ENCODE measurements at regions of chr11 and their contacts with region 1.

Region 1: GRCh38 chr11:93741094-93741881 is at the starts of genes C11orf54 and TAF1D:
- DNase-seq: peak; percentile 92 to 99 (median 94)
- ATAC-seq: peak; percentile 87
- H3K4me3 ChIP-seq: peak within 1 kb of the TSS; percentile 79
- H3K27ac ChIP-seq: peak within 1 kb of the TSS; percentile 98
- H3K4me1 ChIP-seq: peaks cover 4 to 10% of the 10 kb centered on the region in 2 experiments; a peak in 4 of 5 replicates
- H3K27me3 ChIP-seq: no peaks in the 10 kb centered on the region
- CTCF ChIP-seq: 0 out of 6 replicates have a peak, but pooled peaks of 1 of the 3 experiments have one; percentile 1
- EP300 ChIP-seq: peak; percentile 35; the same call in 1 of the 2 replicates
- POLR2A ChIP-seq: peak; percentile 99
- RAD21 ChIP-seq: no peak
- polyA plus RNA-seq, gene C11orf54: 31.5 to 31.7 TPM
- polyA plus RNA-seq, gene TAF1D: 122 to 123 TPM

Region 2: GRCh38 chr11:93498641-93499040 is 242.6 kb before region 1 on chr11:
- CTCF ChIA-PET with region 1: no interaction called
- POLR2A ChIA-PET with region 1: no interaction called
- in situ Hi-C with region 1: no loop called
- intact Hi-C with region 1: no loop called
- DNase-seq: no peak
- ATAC-seq: no peak
- H3K4me3 ChIP-seq: no peak overlapping the region
- H3K27ac ChIP-seq: no peak overlapping the region
- H3K4me1 ChIP-seq: no peaks in the 10 kb centered on the region
- H3K27me3 ChIP-seq: no peaks in the 10 kb centered on the region
- CTCF ChIP-seq: no peak
- EP300 ChIP-seq: no peak
- POLR2A ChIP-seq: no peak
- RAD21 ChIP-seq: no peak

Region 3: DNA sequence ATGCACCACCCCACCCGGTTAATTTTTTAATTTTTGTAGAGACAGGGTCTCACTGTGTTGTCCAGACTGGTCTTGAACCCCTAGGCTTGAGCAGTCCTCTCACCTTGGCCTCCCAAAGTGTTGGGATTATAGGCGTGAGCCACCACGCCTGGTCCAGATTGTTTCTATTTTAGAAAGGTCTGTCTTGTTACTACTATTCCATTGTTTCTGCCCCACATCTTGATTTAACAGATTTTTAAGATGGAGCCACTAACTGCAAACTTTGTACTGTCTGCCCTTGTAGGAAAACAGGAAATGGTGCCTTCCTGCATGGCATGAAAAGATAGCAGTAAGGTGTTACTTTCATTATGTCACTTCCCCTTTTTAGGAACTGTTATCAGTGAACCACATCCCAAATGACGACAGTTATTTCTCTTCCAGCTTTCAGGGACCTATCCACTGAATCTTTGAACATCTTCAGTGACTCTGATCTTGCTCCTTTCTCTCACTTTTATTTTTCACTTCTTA is 23.2 kb before region 1 on chr11:
- CTCF ChIA-PET with region 1: no interaction called
- POLR2A ChIA-PET with region 1: interaction called, 41 read pairs
- in situ Hi-C with region 1: no loop called
- intact Hi-C with region 1: loop called (anchors 1 kb)
- DNase-seq: peak in 3 of 4 experiments; percentile 17 to 84 (median 80)
- ATAC-seq: peak; percentile 79
- H3K4me3 ChIP-seq: no peak overlapping the region
- H3K27ac ChIP-seq: peak overlapping the region; percentile 89
- H3K4me1 ChIP-seq: peaks cover 8 to 35% of the 10 kb centered on the region in 2 experiments
- H3K27me3 ChIP-seq: no peaks in the 10 kb centered on the region
- CTCF ChIP-seq: no peak
- EP300 ChIP-seq: peak; percentile 99
- POLR2A ChIP-seq: no peak
- RAD21 ChIP-seq: no peak; a peak in 1 of 4 replicates

Region 4: GRCh38 chr11:93727985-93728791 is 13.1 kb before region 1 on chr11:
- CTCF ChIA-PET with region 1: interaction called, 4 read pairs
- POLR2A ChIA-PET with region 1: interaction called, 98 read pairs
- in situ Hi-C with region 1: no loop called
- intact Hi-C with region 1: no loop called
- DNase-seq: no peak
- ATAC-seq: peak; percentile 18
- H3K4me3 ChIP-seq: no peak overlapping the region
- H3K27ac ChIP-seq: peak overlapping the region; percentile 21; the same call in 1 of the 3 replicates
- H3K4me1 ChIP-seq: no peaks in the 10 kb centered on the region
- H3K27me3 ChIP-seq: no peaks in the 10 kb centered on the region
- CTCF ChIP-seq: no peak
- EP300 ChIP-seq: no peak
- POLR2A ChIP-seq: no peak
- RAD21 ChIP-seq: no peak

Region 5: GRCh38 chr11:93756748-93757147 is 15.5 kb after region 1 on chr11:
- CTCF ChIA-PET with region 1: no interaction called
- POLR2A ChIA-PET with region 1: interaction called, 33 read pairs
- in situ Hi-C with region 1: no loop called
- intact Hi-C with region 1: no loop called
- DNase-seq: no peak
- ATAC-seq: no peak
- H3K4me3 ChIP-seq: no peak overlapping the region
- H3K27ac ChIP-seq: no peak overlapping the region
- H3K4me1 ChIP-seq: peaks cover 6 to 9% of the 10 kb centered on the region in 2 experiments; a peak in 4 of 5 replicates
- H3K27me3 ChIP-seq: no peaks in the 10 kb centered on the region
- CTCF ChIP-seq: no peak
- EP300 ChIP-seq: no peak
- POLR2A ChIP-seq: no peak
- RAD21 ChIP-seq: no peak

Region 6: DNA sequence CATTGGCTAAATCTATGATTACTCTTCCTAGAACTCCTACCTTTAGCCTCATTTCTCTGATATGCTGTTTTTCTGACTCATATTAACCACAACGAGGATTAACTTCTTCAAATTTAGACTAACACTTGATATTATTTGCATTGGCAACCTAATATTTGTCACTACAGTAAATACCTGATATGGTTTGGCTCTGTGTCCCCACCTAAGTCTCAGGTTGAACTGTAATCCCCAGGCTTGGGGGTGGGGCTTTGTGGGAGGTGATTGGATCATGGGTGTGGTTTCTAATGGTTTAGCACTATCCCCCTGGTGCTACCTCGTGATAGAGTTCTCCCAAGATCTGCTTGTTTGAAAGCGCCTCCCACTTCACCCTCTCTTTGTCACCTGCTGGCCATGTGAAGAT is 25.7 kb after region 1 on chr11:
- CTCF ChIA-PET with region 1: no interaction called
- POLR2A ChIA-PET with region 1: interaction called, 33 read pairs
- in situ Hi-C with region 1: no loop called
- intact Hi-C with region 1: no loop called
- DNase-seq: no peak
- ATAC-seq: peak; percentile 32; the same call in 2 of the 3 replicates
- H3K4me3 ChIP-seq: no peak overlapping the region
- H3K27ac ChIP-seq: no peak overlapping the region
- H3K4me1 ChIP-seq: 0 out of 5 replicates have a peak, but pooled peaks cover 0 to 5% of the 10 kb centered on the region in 2 experiments
- H3K27me3 ChIP-seq: no peaks in the 10 kb centered on the region
- CTCF ChIP-seq: no peak
- EP300 ChIP-seq: no peak
- POLR2A ChIP-seq: no peak
- RAD21 ChIP-seq: no peak

Region 7: GRCh38 chr11:93773045-93773477 is 31.8 kb after region 1 on chr11:
- CTCF ChIA-PET with region 1: no interaction called
- POLR2A ChIA-PET with region 1: interaction called, 13 read pairs
- in situ Hi-C with region 1: no loop called
- intact Hi-C with region 1: no loop called
- DNase-seq: no peak
- ATAC-seq: peak; percentile 63
- H3K4me3 ChIP-seq: no peak overlapping the region
- H3K27ac ChIP-seq: no peak overlapping the region
- H3K4me1 ChIP-seq: peaks cover 0 to 5% of the 10 kb centered on the region in 2 experiments; a peak in 1 of 5 replicates
- H3K27me3 ChIP-seq: no peaks in the 10 kb centered on the region
- CTCF ChIP-seq: no peak
- EP300 ChIP-seq: no peak
- POLR2A ChIP-seq: no peak
- RAD21 ChIP-seq: no peak

Region 8: GRCh38 chr11:93784152-93784934 is 43.1 kb after region 1 on chr11 and contains the start of gene MED17:
- CTCF ChIA-PET with region 1: no interaction called
- POLR2A ChIA-PET with region 1: interaction called, 32 read pairs
- in situ Hi-C with region 1: no loop called
- intact Hi-C with region 1: loop called (anchors 1 kb)
- DNase-seq: peak; percentile 83 to 96 (median 90)
- ATAC-seq: peak; percentile 96
- H3K4me3 ChIP-seq: peak within 1 kb of the TSS; percentile 98
- H3K27ac ChIP-seq: peak within 1 kb of the TSS; percentile 92
- H3K4me1 ChIP-seq: peaks cover 4 to 14% of the 10 kb centered on the region in 2 experiments
- H3K27me3 ChIP-seq: no peaks in the 10 kb centered on the region
- CTCF ChIP-seq: peak; percentile 47 to 59 (median 57)
- EP300 ChIP-seq: no peak; the same call in 1 of the 2 replicates
- POLR2A ChIP-seq: peak; percentile 96
- RAD21 ChIP-seq: peak; percentile 15 to 33; a peak in 3 of 4 replicates
- polyA plus RNA-seq, gene MED17: 6.7 to 7.7 TPM

Region 9: DNA sequence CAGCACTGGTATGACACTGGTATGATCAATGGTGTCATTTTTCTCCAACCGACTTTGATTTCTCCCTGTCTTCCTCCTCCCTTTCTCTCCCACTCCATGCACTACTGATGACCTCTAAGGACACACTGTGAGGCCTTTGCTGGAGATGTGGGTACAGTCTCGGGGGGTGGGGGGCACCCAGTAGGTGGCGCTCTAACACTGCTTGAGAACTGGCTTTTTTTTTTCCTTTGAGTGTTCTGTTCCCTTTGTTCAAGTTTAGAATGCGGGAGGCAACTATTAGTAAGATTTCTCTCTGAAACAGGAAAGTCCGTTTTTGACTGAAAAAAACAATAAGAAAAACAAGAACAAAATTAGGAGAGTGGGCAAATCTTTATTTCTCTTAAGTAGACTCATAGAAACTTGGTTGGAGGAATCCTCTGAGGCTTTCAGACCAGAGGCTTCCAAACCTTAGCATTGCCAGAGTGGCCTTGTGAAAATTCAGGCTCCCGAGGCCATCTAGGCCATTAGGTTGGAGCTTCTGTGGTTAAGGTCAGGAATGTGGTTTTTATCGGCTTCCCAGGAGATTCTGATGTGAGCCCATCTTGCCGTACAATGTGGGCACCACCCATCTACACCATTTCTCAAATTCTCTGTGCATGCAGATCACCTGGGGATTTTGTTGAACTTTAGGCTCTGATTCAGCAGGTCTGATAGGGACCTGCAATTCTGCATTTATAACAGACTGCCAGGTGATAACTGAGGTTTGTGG is 430.6 kb after region 1 on chr11:
- CTCF ChIA-PET with region 1: no interaction called
- POLR2A ChIA-PET with region 1: no interaction called
- in situ Hi-C with region 1: no loop called
- intact Hi-C with region 1: no loop called
- DNase-seq: peak; percentile 75 to 84 (median 82)
- ATAC-seq: peak; percentile 96
- H3K4me3 ChIP-seq: no peak overlapping the region
- H3K27ac ChIP-seq: no peak overlapping the region
- H3K4me1 ChIP-seq: no peaks in the 10 kb centered on the region; a peak in 1 of 5 replicates
- H3K27me3 ChIP-seq: no peaks in the 10 kb centered on the region
- CTCF ChIP-seq: peak; percentile 77 to 91 (median 79)
- EP300 ChIP-seq: no peak
- POLR2A ChIP-seq: no peak
- RAD21 ChIP-seq: peak; percentile 50 to 60; a peak in 3 of 4 replicates